PC-3 (cell line): ENCODE measurements at regions of chr15 and their contacts with region 1.

Region 1: DNA sequence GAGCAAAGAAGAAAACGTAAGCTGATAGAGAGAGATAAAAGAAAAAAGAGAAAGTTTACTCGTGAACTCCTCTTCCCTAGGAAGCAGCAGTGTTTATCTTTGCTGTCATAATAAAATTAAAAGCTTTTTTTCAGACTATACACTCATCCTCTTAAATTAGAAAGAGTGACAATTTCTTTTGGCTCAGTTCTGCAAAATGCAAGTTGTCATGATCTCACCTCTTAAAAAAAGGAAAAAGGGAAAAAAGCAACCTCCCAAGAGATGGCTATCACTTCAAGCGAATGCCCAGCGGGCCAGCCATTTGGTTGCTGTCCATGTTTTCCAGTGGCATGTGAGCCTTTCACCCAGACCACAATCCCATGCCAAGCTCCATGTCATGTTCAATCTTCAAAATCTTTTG is 7.0 kb upstream of the THBS1 start:
- DNase-seq: no peak
- ATAC-seq: peak; percentile 35; the same call in 1 of the 2 replicates
- H3K4me3 ChIP-seq: no peak overlapping the region
- H3K27ac ChIP-seq: no peak overlapping the region
- H3K4me1 ChIP-seq: peaks cover 4% of the 10 kb centered on the region
- H3K27me3 ChIP-seq: no peaks in the 10 kb centered on the region
- CTCF ChIP-seq: no peak

Region 2: DNA sequence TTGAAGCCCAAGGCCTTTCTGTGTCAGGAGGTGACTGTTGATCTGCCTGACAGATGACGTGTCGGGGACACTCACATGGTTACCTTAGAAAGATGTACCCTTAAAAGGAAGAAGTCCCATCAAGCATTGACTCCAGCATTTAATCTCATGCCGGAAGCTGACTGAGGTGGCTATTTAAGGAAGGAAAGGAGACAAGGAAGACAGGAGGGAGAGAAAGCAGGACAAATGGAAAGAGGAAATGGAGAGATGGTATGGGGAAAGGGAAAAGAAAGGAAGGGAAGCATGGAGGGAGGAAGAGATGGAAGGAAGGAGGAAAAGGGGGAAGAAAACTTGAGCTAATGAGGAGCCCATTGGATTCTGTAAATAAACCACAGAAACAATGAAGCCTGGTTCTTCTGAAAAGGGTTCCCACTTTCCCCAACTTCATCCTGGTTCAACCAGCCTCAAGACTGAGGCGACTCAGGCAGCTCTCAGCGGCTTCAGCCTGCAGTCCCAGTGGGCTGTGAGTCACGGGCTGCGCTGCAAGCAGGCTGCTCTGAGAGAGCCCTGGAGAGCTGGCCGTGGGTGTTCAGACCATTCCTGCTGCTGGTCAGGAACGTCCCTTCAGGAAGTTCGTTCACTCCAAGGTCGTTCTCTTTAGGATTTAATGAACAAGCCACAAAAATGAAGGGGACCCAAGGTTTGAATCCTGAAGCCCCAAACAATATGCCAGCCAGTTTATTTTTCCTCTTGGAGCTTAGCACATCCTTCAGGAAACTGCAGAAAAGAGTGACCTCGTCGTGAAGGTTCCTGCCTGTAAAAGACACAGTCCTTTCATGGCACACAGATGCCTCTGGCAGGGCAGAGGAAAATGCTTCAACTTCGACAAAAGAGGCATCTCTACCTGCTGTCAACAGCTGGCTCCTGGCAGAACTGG is 62.6 kb before region 1 on chr15:
- CTCF ChIA-PET with region 1: no interaction called
- POLR2A ChIA-PET with region 1: no interaction called
- intact Hi-C with region 1: loop called (anchors 5 kb)
- DNase-seq: peak; percentile 83
- ATAC-seq: peak; percentile 99
- H3K4me3 ChIP-seq: 0 out of 2 replicates have a peak overlapping the region, but pooled peaks have one; percentile 4
- H3K27ac ChIP-seq: no peak overlapping the region
- H3K4me1 ChIP-seq: peaks cover 13% of the 10 kb centered on the region
- H3K27me3 ChIP-seq: no peaks in the 10 kb centered on the region
- CTCF ChIP-seq: no peak